ENCODE measurements at regions of chrX and their contacts with region 1.

Region 1: GRCh38 chrX:154980330-154981096 is 42.0 kb downstream of the F8 start:
- DNase-seq: peak; percentile 94
- H3K4me3 Mint-ChIP-seq: peak overlapping the region; percentile 79
- H3K27ac Mint-ChIP-seq: peak overlapping the region; percentile 84
- H3K4me1 Mint-ChIP-seq: peaks cover 9% of the 10 kb centered on the region
- H3K27me3 Mint-ChIP-seq: peaks cover under 1% of the 10 kb centered on the region

Region 2: GRCh38 chrX:155056877-155057792 is 76.6 kb after region 1 on chrX:
- intact Hi-C with region 1: loop called (anchors 1 kb)
- DNase-seq: peak; percentile 82
- H3K4me3 Mint-ChIP-seq: peak overlapping the region; percentile 71
- H3K27ac Mint-ChIP-seq: peak overlapping the region; percentile 15
- H3K4me1 Mint-ChIP-seq: peaks cover 17% of the 10 kb centered on the region
- H3K27me3 Mint-ChIP-seq: no peaks in the 10 kb centered on the region

Region 3: DNA sequence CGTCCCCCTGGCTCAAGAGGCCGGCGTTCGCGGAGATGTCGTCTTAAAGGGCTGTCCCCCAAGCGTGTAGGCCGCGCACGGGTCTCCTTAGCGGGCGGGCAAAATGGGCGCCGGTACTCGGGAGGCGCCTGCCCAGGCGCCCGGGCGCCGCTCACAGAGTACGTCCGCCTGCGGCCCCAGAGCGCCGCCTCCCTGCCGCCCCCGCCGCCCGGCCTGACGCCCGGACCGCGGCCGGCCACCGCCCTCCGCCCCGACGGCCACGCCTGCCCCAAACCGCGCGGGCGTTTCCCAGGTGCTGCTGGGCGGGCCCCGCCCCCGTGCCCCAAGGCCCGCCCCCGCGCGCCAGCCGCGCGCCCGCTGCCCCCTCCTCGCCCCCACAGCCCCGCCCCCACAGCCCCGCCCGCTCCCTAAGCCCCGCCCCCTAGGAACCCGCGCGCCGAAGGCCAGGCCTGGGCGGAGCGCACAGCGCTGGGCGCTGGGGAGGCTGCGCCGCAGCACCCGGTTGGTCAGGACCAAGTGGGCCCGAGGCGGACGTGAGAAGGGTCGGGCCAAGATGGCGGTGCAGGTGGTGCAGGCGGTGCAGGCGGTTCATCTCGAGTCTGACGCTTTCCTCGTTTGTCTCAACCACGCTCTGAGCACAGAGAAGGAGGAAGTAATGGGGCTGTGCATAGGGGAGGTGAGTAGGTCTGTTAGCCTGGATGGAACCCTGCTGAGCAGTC is 90.6 kb after region 1 on chrX and contains the starts of genes BRCC3, CMC4 and MTCP1:
- intact Hi-C with region 1: loop called (anchors 5 kb)
- DNase-seq: peak; percentile 93
- H3K4me3 Mint-ChIP-seq: peak within 1 kb of the TSS; percentile 95
- H3K27ac Mint-ChIP-seq: peak within 1 kb of the TSS; percentile 97
- H3K4me1 Mint-ChIP-seq: peaks cover 39% of the 10 kb centered on the region
- H3K27me3 Mint-ChIP-seq: no peaks in the 10 kb centered on the region
- total RNA-seq, gene BRCC3: 28.8 and 28.9 TPM in 2 replicates
- total RNA-seq, gene CMC4: 2.5 and 3.6 TPM in 2 replicates
- total RNA-seq, gene MTCP1: 9.8 and 11.4 TPM in 2 replicates

Region 4: DNA sequence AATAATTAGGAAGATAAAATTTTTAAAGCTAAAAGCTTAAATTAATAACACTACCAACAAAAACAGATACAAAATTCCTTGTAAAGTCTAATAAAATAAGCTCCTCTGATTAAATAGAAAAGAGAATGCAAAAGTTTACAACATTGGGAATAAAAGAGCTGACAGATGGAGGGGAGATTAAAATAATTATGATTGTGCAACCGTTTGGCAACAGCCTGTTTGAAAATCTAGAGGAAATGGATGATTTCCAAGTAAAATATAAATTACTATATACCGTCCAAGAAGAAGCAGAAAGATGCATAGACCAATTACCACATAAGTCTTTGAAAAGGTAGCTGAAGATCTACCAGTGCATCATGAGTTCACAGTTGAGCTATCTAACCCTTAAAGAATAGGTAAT is 189.4 kb after region 1 on chrX:
- intact Hi-C with region 1: no loop called
- DNase-seq: no peak
- H3K4me3 Mint-ChIP-seq: no peak overlapping the region
- H3K27ac Mint-ChIP-seq: no peak overlapping the region
- H3K4me1 Mint-ChIP-seq: no peaks in the 10 kb centered on the region
- H3K27me3 Mint-ChIP-seq: peaks cover 1% of the 10 kb centered on the region

Region 5: DNA sequence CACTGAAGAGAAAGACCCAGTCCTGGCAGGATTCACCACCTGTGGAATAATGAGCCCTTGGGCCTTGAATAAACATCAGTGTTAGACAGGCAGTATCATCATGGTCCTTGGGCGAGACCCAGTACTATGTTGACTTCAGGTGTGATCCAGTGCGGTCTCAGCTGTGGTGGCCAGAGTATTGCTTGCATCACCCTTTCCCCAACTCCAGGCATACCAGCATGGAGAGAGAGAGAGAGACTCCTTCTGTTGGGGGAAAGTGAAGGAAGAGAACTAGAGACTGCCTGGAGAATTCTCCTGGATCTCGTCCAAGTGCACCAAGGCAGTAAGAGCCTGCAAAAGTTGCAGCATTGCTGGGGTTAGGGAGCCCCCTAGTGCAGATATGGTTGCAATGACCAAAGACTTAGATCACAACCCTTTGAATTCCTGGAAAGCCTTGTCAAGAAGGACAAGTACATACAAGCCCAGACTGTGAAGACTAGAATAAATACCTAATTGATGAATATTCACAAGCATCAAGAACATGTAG is 839.5 kb after region 1 on chrX:
- intact Hi-C with region 1: loop called (anchors 5 kb)
- DNase-seq: peak; percentile 80
- H3K4me3 Mint-ChIP-seq: no peak overlapping the region
- H3K27ac Mint-ChIP-seq: no peak overlapping the region
- H3K4me1 Mint-ChIP-seq: peaks cover 2% of the 10 kb centered on the region
- H3K27me3 Mint-ChIP-seq: peaks cover 12% of the 10 kb centered on the region

Measured in activated CD4-positive, alpha-beta T cell treated with anti-CD3 and anti-CD28 coated beads, Interleukin-2, amount 10 ng/mL, durations not matched to agents 24 days and 14 days (primary cell).